Endothelial cell of umbilical vein (primary cell): ENCODE measurements at regions of chr15 and their contacts with region 1.

Region 1: DNA sequence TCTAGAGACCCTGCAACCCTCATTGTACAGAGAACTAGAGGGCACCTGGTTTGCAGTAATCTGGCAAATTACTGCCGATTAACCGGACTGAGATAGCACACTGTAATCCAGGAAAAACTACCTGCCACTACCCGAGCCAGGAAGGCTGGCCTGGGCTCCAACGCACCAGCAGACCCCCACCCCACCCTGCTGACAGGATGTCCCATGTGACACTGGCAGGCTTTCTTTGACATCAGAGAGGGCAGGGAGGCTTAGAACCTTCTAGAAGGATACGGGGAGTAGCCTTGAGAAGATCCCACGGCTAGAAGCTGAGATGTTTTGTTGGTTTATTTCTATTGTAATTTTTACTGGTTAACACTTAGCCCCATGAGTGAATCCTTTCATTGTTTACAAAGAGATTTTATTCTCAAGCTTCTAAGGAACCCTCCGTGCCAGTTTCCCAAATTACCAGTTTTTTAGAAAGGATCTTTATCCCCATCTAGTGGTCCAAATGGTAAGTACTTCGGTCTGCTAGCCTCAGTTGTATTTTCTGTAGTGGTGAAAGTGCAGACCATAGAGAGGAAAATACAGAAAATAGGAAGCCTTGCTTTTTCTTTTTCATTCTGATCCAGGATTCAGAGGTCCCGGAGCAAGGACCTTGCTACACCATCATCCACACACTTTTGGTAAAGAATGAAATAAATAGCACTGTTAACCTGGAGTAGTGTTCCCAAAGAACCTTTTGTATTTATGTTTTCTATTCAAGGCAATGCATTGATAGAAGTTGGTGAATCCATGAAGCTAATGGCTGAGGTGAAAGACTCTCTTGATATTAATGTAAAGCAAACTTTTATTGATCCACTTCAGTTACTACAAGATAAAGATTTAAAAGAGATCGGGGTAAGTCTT is 81.9 kb upstream of the ADAMTSL3 start:
- DNase-seq: peak; percentile 28
- H3K4me3 ChIP-seq: no peak overlapping the region
- H3K27ac ChIP-seq: no peak overlapping the region
- H3K4me1 ChIP-seq: no peaks in the 10 kb centered on the region
- H3K27me3 ChIP-seq: no peaks in the 10 kb centered on the region
- CTCF ChIP-seq: peak; percentile 36 to 38
- POLR2A ChIP-seq: no peak

Region 2: GRCh38 chr15:83462953-83463433 is 109.1 kb before region 1 on chr15:
- CTCF ChIA-PET with region 1: no interaction called
- POLR2A ChIA-PET with region 1: no interaction called
- dilution Hi-C with region 1: no loop called
- intact Hi-C with region 1: no loop called
- DNase-seq: no peak
- H3K4me3 ChIP-seq: no peak overlapping the region
- H3K27ac ChIP-seq: no peak overlapping the region
- H3K4me1 ChIP-seq: no peaks in the 10 kb centered on the region
- H3K27me3 ChIP-seq: no peaks in the 10 kb centered on the region
- CTCF ChIP-seq: no peak
- POLR2A ChIP-seq: no peak

Region 3: DNA sequence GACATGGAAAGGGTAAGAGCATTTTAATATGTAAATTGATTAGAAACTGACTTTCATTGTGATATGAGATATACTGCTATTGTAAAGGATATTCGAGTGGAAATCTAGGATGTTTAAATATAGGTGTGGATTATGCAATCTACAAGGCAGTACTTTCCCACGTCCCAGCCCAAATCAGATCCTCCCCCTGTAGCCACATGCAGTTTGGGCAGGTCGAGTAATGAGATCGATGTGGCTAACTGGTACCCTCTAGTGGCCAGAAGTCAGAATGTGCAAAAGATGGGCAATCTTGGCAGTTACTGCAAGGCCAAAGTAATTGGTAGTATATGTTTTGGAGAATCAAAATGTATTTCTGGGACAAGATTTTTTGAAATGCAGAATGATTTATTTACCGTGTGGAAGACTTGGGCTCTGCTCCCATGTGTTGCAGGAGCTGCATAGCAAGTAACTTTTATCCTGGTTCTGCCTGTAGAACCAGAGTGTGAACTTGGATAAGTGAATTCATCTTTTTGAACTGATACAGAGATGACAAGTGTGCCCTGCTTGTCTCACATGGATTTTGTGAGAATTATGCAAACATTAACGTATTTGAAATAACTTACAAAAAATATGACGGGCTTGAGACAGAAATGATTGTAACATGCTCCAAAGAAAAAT is 12.6 kb before region 1 on chr15:
- CTCF ChIA-PET with region 1: interaction called, 18 read pairs
- POLR2A ChIA-PET with region 1: no interaction called
- dilution Hi-C with region 1: no loop called
- intact Hi-C with region 1: no loop called
- DNase-seq: peak; percentile 61
- H3K4me3 ChIP-seq: no peak overlapping the region
- H3K27ac ChIP-seq: no peak overlapping the region
- H3K4me1 ChIP-seq: no peaks in the 10 kb centered on the region
- H3K27me3 ChIP-seq: no peaks in the 10 kb centered on the region
- CTCF ChIP-seq: peak; percentile 70 to 77
- POLR2A ChIP-seq: no peak